GM12878 (cell line): ENCODE measurements at regions of chrX and their contacts with region 1.

Region 1: GRCh38 chrX:149286940-149287349 is 218.2 kb downstream of the IDS start:
- DNase-seq: peak; percentile 40
- ATAC-seq: peak; percentile 76
- H3K4me3 ChIP-seq: no peak overlapping the region
- H3K27ac ChIP-seq: no peak overlapping the region
- H3K4me1 ChIP-seq: no peaks in the 10 kb centered on the region
- H3K27me3 ChIP-seq: no peaks in the 10 kb centered on the region
- CTCF ChIP-seq: peak; percentile 73 to 85 (median 73)
- EP300 ChIP-seq: no peak
- POLR2A ChIP-seq: no peak
- RAD21 ChIP-seq: peak; percentile 83

Region 2: DNA sequence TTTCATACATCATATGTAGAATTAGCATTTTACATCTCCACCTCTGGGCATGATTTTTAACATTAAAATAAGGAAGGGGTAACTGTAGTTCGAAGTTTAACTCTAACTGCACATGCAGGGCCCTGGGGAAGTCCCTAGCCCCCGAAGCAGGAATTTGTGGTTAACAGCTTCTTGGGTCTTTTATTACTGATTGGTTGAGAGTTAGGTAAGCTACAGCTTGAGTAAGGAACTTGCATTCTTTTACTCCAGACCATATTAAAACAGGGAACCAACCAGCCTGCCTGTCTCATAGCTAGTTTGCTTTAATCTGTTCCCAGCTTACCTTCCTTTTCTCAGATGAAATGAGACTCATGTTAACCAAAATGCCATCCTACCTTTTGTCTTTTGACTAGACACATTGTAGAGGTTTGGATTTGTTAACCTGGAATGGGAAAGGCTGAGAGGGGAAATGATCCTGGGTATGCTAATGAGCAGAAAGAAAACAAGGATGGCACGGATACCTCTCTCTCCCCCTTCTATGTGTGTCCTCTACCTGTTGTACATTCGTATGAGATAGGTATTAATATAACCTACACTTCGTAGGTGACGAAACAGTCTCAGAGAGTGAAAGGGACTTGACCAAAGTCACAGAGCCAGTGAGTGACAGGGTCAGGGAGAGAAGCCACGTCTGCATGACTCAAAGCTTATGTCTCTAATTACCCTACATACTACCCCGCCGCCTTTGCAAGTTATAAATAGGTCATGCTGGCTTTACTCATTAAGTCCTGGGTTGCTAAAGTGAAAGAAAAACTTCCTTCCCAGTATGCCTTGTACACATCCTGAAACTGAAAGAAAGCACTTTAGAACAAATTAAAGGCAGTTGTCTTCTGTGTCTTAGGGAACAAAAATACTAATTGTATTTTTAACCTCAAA is 906.0 kb before region 1 on chrX:
- CTCF ChIA-PET with region 1: no interaction called
- POLR2A ChIA-PET with region 1: no interaction called
- RAD21 ChIA-PET with region 1: interaction called, 3 read pairs
- SMC1A ChIA-PET with region 1: no interaction called
- in situ Hi-C with region 1: no loop called
- intact Hi-C with region 1: loop called (anchors 10 kb)
- DNase-seq: peak; percentile 55
- ATAC-seq: peak; percentile 98
- H3K4me3 ChIP-seq: peak overlapping the region; percentile 56
- H3K27ac ChIP-seq: peak overlapping the region; percentile 47
- H3K4me1 ChIP-seq: peaks cover 6% of the 10 kb centered on the region; the same call in 1 of the 2 replicates
- H3K27me3 ChIP-seq: no peaks in the 10 kb centered on the region
- CTCF ChIP-seq: no peak
- EP300 ChIP-seq: 0 out of 4 replicates have a peak, but pooled peaks of 1 of the 2 experiments have one; percentile 9
- POLR2A ChIP-seq: no peak
- RAD21 ChIP-seq: no peak

Region 3: GRCh38 chrX:149003863-149004660 is 282.9 kb before region 1 on chrX:
- CTCF ChIA-PET with region 1: interaction called, 9 read pairs
- POLR2A ChIA-PET with region 1: no interaction called
- RAD21 ChIA-PET with region 1: interaction called, 12 read pairs
- SMC1A ChIA-PET with region 1: interaction called, 9 read pairs
- in situ Hi-C with region 1: no loop called
- intact Hi-C with region 1: loop called (anchors 10 kb)
- DNase-seq: peak; percentile 26
- ATAC-seq: peak; percentile 71
- H3K4me3 ChIP-seq: no peak overlapping the region
- H3K27ac ChIP-seq: no peak overlapping the region
- H3K4me1 ChIP-seq: no peaks in the 10 kb centered on the region; the same call in 1 of the 2 replicates
- H3K27me3 ChIP-seq: no peaks in the 10 kb centered on the region
- CTCF ChIP-seq: no peak
- EP300 ChIP-seq: peak in 1 of 2 experiments; percentile 47; a peak in 1 of 4 replicates
- POLR2A ChIP-seq: no peak
- RAD21 ChIP-seq: no peak

Region 4: DNA sequence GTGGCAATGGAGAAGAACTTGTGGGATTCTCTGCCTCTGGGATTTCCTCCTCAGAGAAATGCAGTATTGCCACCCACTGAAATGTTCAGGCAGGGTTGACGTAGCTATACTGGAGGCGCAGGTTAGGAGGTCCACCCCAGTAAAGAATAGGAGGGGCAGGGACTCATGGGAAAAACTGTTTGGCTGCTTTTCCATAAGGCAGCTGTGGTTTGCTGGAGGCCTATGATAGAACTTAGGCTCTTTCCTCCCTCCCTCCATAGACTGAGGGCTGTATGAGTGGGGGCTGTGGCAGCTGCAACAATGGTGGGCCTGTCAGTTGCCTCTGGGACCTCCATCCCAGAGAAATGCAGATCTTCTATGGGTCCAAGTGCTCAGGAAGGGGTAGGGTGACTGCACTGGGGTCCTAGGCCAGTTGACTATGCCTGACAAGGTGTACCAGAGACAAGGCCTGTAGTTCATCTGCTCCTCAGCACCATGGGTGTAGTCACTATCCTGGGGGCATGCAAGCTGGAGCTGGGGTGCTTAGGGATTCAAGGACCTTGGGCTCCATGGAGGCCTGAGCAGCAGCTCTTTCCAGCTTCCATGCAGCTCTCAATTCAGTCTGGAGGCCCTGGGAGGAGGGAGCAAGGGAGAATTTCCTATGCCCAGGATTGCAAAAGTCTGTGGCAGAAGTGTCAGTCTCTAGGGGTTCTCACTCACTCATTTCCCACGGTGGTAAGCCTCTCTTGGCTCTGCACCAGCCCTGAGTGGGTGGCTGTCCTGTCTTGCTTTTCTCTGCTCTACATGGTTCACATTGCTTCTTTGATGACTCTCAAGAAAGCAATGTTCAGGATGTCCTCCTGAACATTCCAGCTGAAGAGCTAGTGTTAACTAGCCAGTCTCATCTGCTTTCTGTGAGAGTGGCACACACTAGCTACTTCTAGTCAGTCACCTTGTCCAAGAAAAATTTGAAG is 134.9 kb before region 1 on chrX:
- CTCF ChIA-PET with region 1: interaction called, 12 read pairs
- POLR2A ChIA-PET with region 1: interaction called, 3 read pairs
- RAD21 ChIA-PET with region 1: interaction called, 20 read pairs
- SMC1A ChIA-PET with region 1: interaction called, 21 read pairs
- in situ Hi-C with region 1: no loop called
- intact Hi-C with region 1: loop called (anchors 5 kb)
- DNase-seq: peak; percentile 24
- ATAC-seq: peak; percentile 85
- H3K4me3 ChIP-seq: no peak overlapping the region
- H3K27ac ChIP-seq: no peak overlapping the region
- H3K4me1 ChIP-seq: no peaks in the 10 kb centered on the region
- H3K27me3 ChIP-seq: no peaks in the 10 kb centered on the region
- CTCF ChIP-seq: no peak
- EP300 ChIP-seq: no peak
- POLR2A ChIP-seq: no peak
- RAD21 ChIP-seq: no peak

Region 5: GRCh38 chrX:149259241-149259640 is 27.7 kb before region 1 on chrX:
- CTCF ChIA-PET with region 1: interaction called, 4 read pairs
- POLR2A ChIA-PET with region 1: no interaction called
- RAD21 ChIA-PET with region 1: interaction called, 6 read pairs
- SMC1A ChIA-PET with region 1: interaction called, 10 read pairs
- in situ Hi-C with region 1: no loop called
- intact Hi-C with region 1: no loop called
- DNase-seq: no peak
- ATAC-seq: no peak
- H3K4me3 ChIP-seq: no peak overlapping the region
- H3K27ac ChIP-seq: no peak overlapping the region
- H3K4me1 ChIP-seq: no peaks in the 10 kb centered on the region
- H3K27me3 ChIP-seq: no peaks in the 10 kb centered on the region
- CTCF ChIP-seq: no peak
- EP300 ChIP-seq: no peak
- POLR2A ChIP-seq: no peak
- RAD21 ChIP-seq: no peak

Region 6: DNA sequence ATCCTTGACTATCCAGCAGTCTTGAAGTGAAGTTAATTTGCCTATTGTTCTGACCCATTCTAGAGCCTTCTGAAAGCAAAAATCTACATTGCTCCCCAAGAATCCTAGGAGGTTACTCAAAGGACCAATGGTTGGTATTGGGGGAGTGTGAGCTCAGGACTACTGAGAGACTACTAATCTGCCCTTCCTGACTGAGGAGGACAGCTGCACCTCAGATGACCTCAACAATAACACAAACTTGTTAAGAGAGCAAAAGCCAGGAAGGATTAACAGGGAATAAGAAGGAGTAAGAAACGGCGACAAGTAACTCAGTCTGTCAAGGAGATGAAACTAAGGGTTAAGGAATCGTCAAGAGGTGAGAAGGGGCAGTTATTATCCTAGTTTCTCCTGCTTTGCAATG is 174.8 kb after region 1 on chrX:
- CTCF ChIA-PET with region 1: no interaction called
- POLR2A ChIA-PET with region 1: no interaction called
- RAD21 ChIA-PET with region 1: no interaction called
- SMC1A ChIA-PET with region 1: no interaction called
- in situ Hi-C with region 1: no loop called
- intact Hi-C with region 1: no loop called
- DNase-seq: no peak
- ATAC-seq: no peak
- H3K4me3 ChIP-seq: no peak overlapping the region
- H3K27ac ChIP-seq: no peak overlapping the region
- H3K4me1 ChIP-seq: no peaks in the 10 kb centered on the region
- H3K27me3 ChIP-seq: no peaks in the 10 kb centered on the region
- CTCF ChIP-seq: no peak
- EP300 ChIP-seq: no peak
- POLR2A ChIP-seq: no peak
- RAD21 ChIP-seq: no peak

Region 7: DNA sequence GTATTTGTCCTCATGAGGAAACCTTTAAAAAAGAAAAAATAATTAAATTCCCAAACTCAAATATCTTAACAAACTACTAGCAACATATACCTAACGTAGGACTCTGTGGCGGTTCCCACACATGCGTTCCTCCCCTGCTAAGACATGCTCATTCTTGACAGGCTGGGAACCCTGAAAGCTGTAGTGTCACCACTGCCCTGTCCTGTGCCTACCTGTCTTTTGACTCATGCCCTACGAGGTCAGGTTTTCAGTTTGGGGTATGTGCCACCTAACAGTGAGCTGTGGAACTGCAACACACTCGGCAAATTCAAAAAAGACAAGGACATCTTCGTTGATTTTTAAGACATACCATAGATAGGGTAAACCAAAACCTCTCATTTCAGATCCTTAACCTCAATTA is 200.3 kb after region 1 on chrX:
- CTCF ChIA-PET with region 1: no interaction called
- POLR2A ChIA-PET with region 1: no interaction called
- RAD21 ChIA-PET with region 1: no interaction called
- SMC1A ChIA-PET with region 1: no interaction called
- in situ Hi-C with region 1: no loop called
- intact Hi-C with region 1: no loop called
- DNase-seq: no peak
- ATAC-seq: peak; percentile 79
- H3K4me3 ChIP-seq: no peak overlapping the region
- H3K27ac ChIP-seq: no peak overlapping the region
- H3K4me1 ChIP-seq: no peaks in the 10 kb centered on the region
- H3K27me3 ChIP-seq: no peaks in the 10 kb centered on the region
- CTCF ChIP-seq: peak; percentile 23 to 29 (median 28); a peak in 3 of 6 replicates
- EP300 ChIP-seq: no peak
- POLR2A ChIP-seq: no peak
- RAD21 ChIP-seq: peak; percentile 5; the same call in 1 of the 2 replicates

Region 8: GRCh38 chrX:149522916-149523315 is 236.0 kb after region 1 on chrX:
- CTCF ChIA-PET with region 1: no interaction called
- POLR2A ChIA-PET with region 1: no interaction called
- RAD21 ChIA-PET with region 1: no interaction called
- SMC1A ChIA-PET with region 1: no interaction called
- in situ Hi-C with region 1: no loop called
- intact Hi-C with region 1: no loop called
- DNase-seq: no peak
- ATAC-seq: no peak
- H3K4me3 ChIP-seq: no peak overlapping the region
- H3K27ac ChIP-seq: no peak overlapping the region
- H3K4me1 ChIP-seq: peaks cover 12% of the 10 kb centered on the region
- H3K27me3 ChIP-seq: no peaks in the 10 kb centered on the region
- CTCF ChIP-seq: no peak
- EP300 ChIP-seq: no peak
- POLR2A ChIP-seq: no peak
- RAD21 ChIP-seq: no peak